MCF 10A (cell line): ENCODE measurements at regions of chr1 and their contacts with region 1.

Region 1: DNA sequence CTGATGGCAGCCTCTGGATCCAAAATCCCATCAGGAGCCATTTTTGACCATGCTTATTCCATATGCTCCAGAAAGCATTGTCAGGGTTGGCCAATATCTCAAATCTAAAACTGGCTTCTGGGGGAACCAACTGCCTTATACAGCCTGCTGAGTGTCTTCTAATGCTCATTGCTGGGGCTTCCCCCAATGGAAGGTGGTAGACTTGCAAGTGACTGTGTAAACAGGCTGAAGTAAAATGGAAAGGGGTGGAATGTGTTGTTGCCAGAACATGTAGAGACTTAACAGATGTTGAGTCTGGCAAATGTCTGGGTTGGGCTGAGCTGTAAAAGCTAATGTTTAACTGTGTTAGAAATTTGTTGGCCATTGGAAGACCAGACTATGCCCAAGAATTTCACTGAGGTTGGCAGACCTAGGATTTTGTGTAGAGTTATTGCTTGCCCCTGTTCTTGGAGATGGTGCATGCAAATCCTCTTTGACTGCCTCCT is 22.7 kb upstream of the LRIF1 start:
- DNase-seq: no peak
- H3K4me3 Mint-ChIP-seq: no peak overlapping the region
- H3K27ac Mint-ChIP-seq: no peak overlapping the region
- H3K4me1 Mint-ChIP-seq: no peaks in the 10 kb centered on the region
- H3K27me3 Mint-ChIP-seq: peaks cover 28% of the 10 kb centered on the region
- CTCF ChIP-seq: no peak

Region 2: DNA sequence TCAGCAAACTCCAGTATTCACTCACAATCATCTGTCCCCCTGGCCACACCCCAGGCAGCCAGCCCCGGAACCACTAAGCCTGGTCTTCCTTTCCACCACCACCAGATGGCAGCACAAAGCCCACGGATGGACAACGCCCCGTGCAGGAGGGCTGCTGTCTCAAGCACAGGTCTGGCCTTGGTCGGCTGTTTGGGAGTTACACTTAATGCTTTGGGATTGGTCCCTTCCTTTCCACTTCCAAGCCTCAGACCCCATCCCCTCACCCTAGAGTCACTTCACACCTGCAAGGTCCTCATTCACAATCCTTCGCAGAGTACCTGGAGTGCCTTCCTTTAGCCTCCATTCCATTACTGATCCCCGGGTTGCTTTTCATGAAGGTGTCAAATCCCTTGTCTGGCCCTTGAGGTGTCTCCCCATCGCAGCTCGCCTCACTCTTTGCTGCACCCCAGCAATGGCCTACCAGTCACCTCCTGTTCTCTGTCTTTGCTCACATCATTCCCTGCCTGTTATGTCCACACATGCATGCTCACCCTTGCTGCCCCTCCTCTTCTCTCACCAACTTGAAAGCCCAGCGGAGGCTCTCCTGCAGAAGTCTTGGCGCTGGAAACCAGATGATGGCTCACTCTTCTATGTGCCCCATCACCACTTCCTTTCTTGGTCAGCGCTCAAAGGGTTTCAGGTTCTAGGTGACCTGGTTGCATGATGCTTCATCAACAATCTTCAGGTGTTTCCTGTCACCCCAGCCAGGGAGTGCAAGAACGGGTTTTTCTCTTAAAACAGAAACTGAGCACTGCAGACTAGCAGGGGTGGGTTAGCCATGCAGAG is 355.4 kb before region 1 on chr1:
- CTCF ChIA-PET with region 1: interaction called, 3 read pairs
- POLR2A ChIA-PET with region 1: no interaction called
- intact Hi-C with region 1: loop called (anchors 10 kb)
- DNase-seq: peak; percentile 74
- H3K4me3 Mint-ChIP-seq: no peak overlapping the region
- H3K27ac Mint-ChIP-seq: no peak overlapping the region
- H3K4me1 Mint-ChIP-seq: peaks cover 13% of the 10 kb centered on the region
- H3K27me3 Mint-ChIP-seq: peaks cover 31% of the 10 kb centered on the region
- CTCF ChIP-seq: peak; percentile 80